Activated CD4-positive, alpha-beta T cell treated with anti-CD3 and anti-CD28 coated beads, Interleukin-2, amount 10 ng/mL, durations not matched to agents 24 days and 14 days (primary cell): ENCODE measurements at regions of chr2 and their contacts with region 1.

Region 1: DNA sequence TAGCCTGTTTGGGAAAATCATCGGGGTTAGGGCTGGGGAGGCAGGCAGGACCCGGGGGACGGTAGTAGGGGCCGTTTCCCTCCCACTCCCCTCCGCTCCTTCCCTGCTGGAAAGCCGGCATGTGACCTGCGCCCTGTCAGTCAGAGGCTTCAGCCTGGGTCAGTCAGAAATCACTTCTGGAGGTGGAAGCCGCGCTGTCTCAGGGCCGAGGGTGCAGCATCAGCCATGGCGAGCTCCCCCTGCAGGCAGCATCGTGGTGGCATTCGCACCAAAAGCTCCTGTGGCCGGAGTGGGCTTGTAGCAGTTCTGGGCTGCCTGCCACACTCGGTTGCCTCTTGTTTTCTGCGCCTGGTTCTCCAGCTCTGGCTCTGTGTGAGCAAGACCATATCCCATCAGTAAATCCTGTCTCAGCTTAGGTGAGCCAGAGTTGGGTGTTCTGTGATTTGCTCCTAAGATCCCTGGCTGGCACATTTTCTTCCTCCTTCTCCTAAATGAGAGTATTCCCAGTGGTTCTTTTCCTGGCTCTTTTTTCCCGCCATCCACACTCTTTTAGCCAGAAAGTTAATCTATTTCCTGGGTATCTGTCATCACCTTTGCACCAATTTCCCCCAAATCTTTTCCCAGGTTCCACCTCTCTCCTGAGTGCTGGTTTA is 123.9 kb upstream of the CD302 start:
- DNase-seq: peak; percentile 90
- H3K4me3 Mint-ChIP-seq: no peak overlapping the region
- H3K27ac Mint-ChIP-seq: no peak overlapping the region
- H3K4me1 Mint-ChIP-seq: peaks cover 11% of the 10 kb centered on the region
- H3K27me3 Mint-ChIP-seq: peaks cover 7% of the 10 kb centered on the region

Region 2: GRCh38 chr2:159650574-159650973 is 271.3 kb before region 1 on chr2:
- intact Hi-C with region 1: no loop called
- DNase-seq: no peak
- H3K4me3 Mint-ChIP-seq: no peak overlapping the region
- H3K27ac Mint-ChIP-seq: no peak overlapping the region
- H3K4me1 Mint-ChIP-seq: no peaks in the 10 kb centered on the region
- H3K27me3 Mint-ChIP-seq: no peaks in the 10 kb centered on the region

Region 3: DNA sequence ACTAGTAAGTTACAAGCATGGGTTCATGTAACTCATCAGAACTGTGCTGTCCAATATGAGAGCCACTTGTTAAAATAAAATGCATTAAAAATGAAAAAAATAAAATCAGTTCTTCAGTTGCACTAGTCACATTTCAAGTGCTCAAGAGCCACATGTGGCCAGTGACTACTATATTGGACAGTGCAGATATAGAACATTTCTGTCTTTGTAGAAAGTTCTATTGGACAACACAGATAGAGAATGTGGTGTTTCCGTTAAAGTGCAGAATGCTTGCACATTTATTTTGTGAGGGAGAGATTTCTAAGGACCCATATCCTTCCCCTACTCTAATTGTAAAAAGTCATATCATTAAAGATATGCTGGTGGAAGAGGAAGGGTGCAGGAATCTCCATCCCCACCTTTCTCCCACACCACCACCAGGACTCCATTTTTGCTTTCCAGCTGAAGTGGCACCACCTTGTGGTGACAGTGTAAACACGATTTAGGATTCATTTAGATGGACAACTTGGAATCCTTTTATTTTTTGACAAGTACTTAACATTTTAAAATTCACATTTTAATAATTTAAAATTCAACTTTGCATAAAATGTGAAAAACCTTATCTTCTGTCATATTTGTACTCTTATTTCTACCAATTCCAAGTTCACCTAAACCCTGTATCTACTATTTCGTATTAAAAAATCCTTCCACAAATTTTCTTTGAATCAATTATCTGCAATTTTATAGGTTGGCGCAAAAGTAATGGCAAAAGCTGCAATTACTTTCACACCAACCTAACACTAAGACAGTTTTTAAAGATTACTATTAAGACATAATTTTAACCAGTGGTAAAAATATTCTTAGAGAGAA is 114.5 kb before region 1 on chr2:
- intact Hi-C with region 1: loop called (anchors 5 kb)
- DNase-seq: peak; percentile 68
- H3K4me3 Mint-ChIP-seq: no peak overlapping the region
- H3K27ac Mint-ChIP-seq: no peak overlapping the region
- H3K4me1 Mint-ChIP-seq: no peaks in the 10 kb centered on the region
- H3K27me3 Mint-ChIP-seq: no peaks in the 10 kb centered on the region

Region 4: GRCh38 chr2:159895258-159896065 is 26.4 kb before region 1 on chr2:
- intact Hi-C with region 1: loop called (anchors 1 kb)
- DNase-seq: no peak
- H3K4me3 Mint-ChIP-seq: no peak overlapping the region
- H3K27ac Mint-ChIP-seq: peak overlapping the region; percentile 78
- H3K4me1 Mint-ChIP-seq: peaks cover 33% of the 10 kb centered on the region
- H3K27me3 Mint-ChIP-seq: no peaks in the 10 kb centered on the region

Region 5: GRCh38 chr2:159904127-159904958 is 17.5 kb before region 1 on chr2:
- intact Hi-C with region 1: loop called (anchors 2 kb)
- DNase-seq: peak; percentile 93
- H3K4me3 Mint-ChIP-seq: peak within 1 kb of the TSS; percentile 98
- H3K27ac Mint-ChIP-seq: peak within 1 kb of the TSS; percentile 94
- H3K4me1 Mint-ChIP-seq: peaks cover 36% of the 10 kb centered on the region
- H3K27me3 Mint-ChIP-seq: no peaks in the 10 kb centered on the region

Region 6: GRCh38 chr2:159910951-159911350 is 10.9 kb before region 1 on chr2:
- intact Hi-C with region 1: loop called (anchors 1 kb)
- DNase-seq: no peak
- H3K4me3 Mint-ChIP-seq: no peak overlapping the region
- H3K27ac Mint-ChIP-seq: no peak overlapping the region
- H3K4me1 Mint-ChIP-seq: peaks cover 19% of the 10 kb centered on the region
- H3K27me3 Mint-ChIP-seq: no peaks in the 10 kb centered on the region